Natural killer cell (primary cell): ENCODE measurements at regions of chr4 and their contacts with region 1.

Region 1: GRCh38 chr4:182925298-182925738 is 8.1 kb upstream of the DCTD start:
- DNase-seq: peak; percentile 36 to 78
- ATAC-seq: peak; percentile 86 to 100 (median 99)
- H3K4me3 ChIP-seq: no peak overlapping the region
- H3K4me3 Mint-ChIP-seq: no peak overlapping the region
- H3K27ac ChIP-seq: no peak overlapping the region
- H3K27ac Mint-ChIP-seq: no peak overlapping the region
- H3K4me1 ChIP-seq: no peaks in the 10 kb centered on the region
- H3K4me1 Mint-ChIP-seq: no peaks in the 10 kb centered on the region
- H3K27me3 ChIP-seq: no peaks in the 10 kb centered on the region
- H3K27me3 Mint-ChIP-seq: peaks cover 0 to 6% of the 10 kb centered on the region in 2 donors
- CTCF ChIP-seq: peak; percentile 23

Region 2: GRCh38 chr4:182369211-182369610 is 556.1 kb before region 1 on chr4:
- intact Hi-C with region 1: no loop called
- DNase-seq: no peak
- ATAC-seq: no peak
- H3K4me3 ChIP-seq: no peak overlapping the region
- H3K4me3 Mint-ChIP-seq: no peak overlapping the region
- H3K27ac ChIP-seq: no peak overlapping the region
- H3K27ac Mint-ChIP-seq: no peak overlapping the region
- H3K4me1 ChIP-seq: no peaks in the 10 kb centered on the region
- H3K4me1 Mint-ChIP-seq: no peaks in the 10 kb centered on the region
- H3K27me3 ChIP-seq: no peaks in the 10 kb centered on the region
- H3K27me3 Mint-ChIP-seq: peaks cover 0 to 3% of the 10 kb centered on the region in 2 donors
- CTCF ChIP-seq: no peak

Region 3: DNA sequence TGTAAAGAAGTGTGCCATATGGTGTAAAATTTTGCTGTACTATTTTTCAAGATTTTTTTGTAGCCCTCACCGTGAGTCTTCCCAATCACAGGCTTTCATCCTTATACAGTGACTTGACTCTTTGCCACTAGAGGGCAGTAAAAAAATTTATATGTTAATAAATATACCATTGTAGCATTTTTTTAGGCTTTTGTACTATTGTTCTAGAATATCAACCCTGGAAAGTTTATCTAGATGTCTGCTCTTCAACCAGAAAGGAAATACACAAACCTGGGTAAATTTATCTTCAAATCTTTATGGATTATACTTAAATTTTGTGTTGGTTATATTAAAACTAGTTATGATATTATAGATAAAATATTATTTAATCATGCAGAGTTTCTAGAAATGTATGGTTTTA is 446.8 kb before region 1 on chr4:
- intact Hi-C with region 1: loop called (anchors 2 kb)
- DNase-seq: peak in 1 of 2 donors; percentile 39
- ATAC-seq: peak in 2 of 3 donors; percentile 44 to 53
- H3K4me3 ChIP-seq: no peak overlapping the region
- H3K4me3 Mint-ChIP-seq: no peak overlapping the region
- H3K27ac ChIP-seq: no peak overlapping the region
- H3K27ac Mint-ChIP-seq: no peak overlapping the region
- H3K4me1 ChIP-seq: no peaks in the 10 kb centered on the region
- H3K4me1 Mint-ChIP-seq: no peaks in the 10 kb centered on the region
- H3K27me3 ChIP-seq: no peaks in the 10 kb centered on the region
- H3K27me3 Mint-ChIP-seq: no peaks in the 10 kb centered on the region
- CTCF ChIP-seq: peak; percentile 69

Region 4: DNA sequence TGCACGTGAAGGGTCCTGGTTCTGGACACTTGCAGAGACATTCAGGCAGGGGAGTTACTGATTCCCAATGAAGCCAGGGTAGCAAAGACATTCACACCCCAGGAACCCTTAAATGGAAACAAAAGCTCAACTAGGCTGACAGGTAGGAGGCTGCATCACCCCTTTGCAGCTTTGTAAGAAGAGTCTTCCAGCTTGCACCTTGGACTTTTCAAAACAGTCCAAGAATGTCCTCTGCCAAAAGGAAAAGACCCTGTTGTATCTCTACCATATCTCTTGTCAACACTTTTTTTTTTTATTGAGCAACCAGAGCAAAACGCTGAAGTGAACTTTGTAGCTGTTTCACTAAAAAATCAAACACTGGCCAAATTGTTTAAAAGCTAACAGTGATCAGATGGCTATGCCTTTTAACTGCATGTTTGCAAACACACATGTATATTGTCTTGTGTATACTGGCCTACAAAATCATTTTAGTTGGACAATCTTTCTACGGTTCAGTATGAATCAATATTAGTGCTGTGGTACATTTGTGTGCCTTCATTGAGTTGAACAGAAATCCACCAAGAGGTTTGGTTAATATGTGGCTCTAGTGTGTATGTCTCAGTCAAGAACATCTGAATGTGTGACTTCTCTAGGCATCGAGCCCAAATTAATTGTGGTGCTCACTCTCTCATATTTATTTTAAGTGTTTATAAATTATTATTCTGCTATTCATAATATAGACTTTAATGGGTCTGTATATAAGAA is 155.2 kb after region 1 on chr4:
- intact Hi-C with region 1: no loop called
- DNase-seq: no peak
- ATAC-seq: no peak
- H3K4me3 ChIP-seq: no peak overlapping the region
- H3K4me3 Mint-ChIP-seq: no peak overlapping the region
- H3K27ac ChIP-seq: no peak overlapping the region
- H3K27ac Mint-ChIP-seq: no peak overlapping the region
- H3K4me1 ChIP-seq: no peaks in the 10 kb centered on the region
- H3K4me1 Mint-ChIP-seq: no peaks in the 10 kb centered on the region
- H3K27me3 ChIP-seq: no peaks in the 10 kb centered on the region
- H3K27me3 Mint-ChIP-seq: peaks cover 0 to 12% of the 10 kb centered on the region in 2 donors
- CTCF ChIP-seq: no peak

Region 5: DNA sequence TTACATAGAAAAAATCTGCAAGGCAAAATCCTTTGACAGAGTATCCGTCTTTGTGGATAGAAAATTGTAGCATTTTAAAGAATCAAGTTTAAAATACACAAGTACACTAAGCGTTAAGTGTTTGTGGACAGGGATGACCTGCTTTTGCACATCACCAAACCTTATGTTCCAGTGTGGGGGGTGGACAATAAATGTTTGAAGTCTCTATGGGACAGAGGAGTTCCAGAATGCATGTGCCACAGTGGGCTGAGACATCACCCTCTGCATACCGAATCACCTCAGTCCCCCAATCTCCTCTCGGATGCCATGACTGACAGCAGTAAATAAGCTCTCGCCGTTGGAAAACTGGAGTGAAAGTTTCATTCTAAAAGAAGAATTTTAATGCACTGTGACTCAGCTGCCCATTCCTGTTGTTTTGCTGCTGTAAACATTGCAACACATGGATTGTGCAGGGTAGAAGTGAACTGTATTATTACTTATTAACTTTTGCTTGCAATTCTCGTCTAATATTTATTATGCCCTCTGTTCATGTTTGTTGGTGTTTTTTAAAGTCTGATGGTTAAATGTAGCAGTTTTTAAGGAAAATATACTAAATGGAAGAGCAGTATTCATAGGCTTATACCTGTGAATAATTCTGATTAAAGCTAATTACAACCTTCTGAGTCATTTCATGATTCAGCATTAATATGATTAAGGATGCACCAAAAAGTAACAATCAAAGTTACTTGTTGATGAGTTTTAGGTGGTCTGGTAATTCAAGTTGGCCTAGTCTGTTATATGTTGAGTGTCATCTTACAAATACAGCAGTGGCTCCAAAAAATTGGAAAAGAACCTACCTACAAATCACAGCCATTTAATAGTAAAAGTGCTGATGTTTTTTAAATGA is 543.1 kb after region 1 on chr4:
- intact Hi-C with region 1: no loop called
- DNase-seq: no peak
- ATAC-seq: no peak
- H3K4me3 ChIP-seq: no peak overlapping the region
- H3K4me3 Mint-ChIP-seq: no peak overlapping the region
- H3K27ac ChIP-seq: no peak overlapping the region
- H3K27ac Mint-ChIP-seq: no peak overlapping the region
- H3K4me1 ChIP-seq: no peaks in the 10 kb centered on the region
- H3K4me1 Mint-ChIP-seq: peaks cover 0 to 7% of the 10 kb centered on the region in 2 donors
- H3K27me3 ChIP-seq: no peaks in the 10 kb centered on the region
- H3K27me3 Mint-ChIP-seq: no peaks in the 10 kb centered on the region
- CTCF ChIP-seq: no peak